Activated CD4-positive, alpha-beta T cell treated with anti-CD3 and anti-CD28 coated beads for 36 hours (primary cell): ENCODE measurements at regions of chr16 and their contacts with region 1.

Region 1: GRCh38 chr16:20683812-20684211 is 13.7 kb downstream of the ACSM1 start:
- DNase-seq: no peak
- ATAC-seq: peak; percentile 95
- H3K4me3 Mint-ChIP-seq: no peak overlapping the region
- H3K27ac Mint-ChIP-seq: peak overlapping the region; percentile 69
- H3K4me1 Mint-ChIP-seq: peaks cover 14% of the 10 kb centered on the region
- H3K27me3 Mint-ChIP-seq: no peaks in the 10 kb centered on the region

Region 2: GRCh38 chr16:20660325-20660724 is 23.5 kb before region 1 on chr16:
- CTCF ChIA-PET with region 1: interaction called, 3 read pairs
- POLR2A ChIA-PET with region 1: no interaction called
- intact Hi-C with region 1: loop called in 1 of 2 experiments (anchors 2 kb)
- DNase-seq: no peak
- ATAC-seq: no peak
- H3K4me3 Mint-ChIP-seq: no peak overlapping the region
- H3K27ac Mint-ChIP-seq: no peak overlapping the region
- H3K4me1 Mint-ChIP-seq: no peaks in the 10 kb centered on the region
- H3K27me3 Mint-ChIP-seq: peaks cover 9% of the 10 kb centered on the region